ENCODE measurements at regions of chr1 and their contacts with region 1.

Region 1: DNA sequence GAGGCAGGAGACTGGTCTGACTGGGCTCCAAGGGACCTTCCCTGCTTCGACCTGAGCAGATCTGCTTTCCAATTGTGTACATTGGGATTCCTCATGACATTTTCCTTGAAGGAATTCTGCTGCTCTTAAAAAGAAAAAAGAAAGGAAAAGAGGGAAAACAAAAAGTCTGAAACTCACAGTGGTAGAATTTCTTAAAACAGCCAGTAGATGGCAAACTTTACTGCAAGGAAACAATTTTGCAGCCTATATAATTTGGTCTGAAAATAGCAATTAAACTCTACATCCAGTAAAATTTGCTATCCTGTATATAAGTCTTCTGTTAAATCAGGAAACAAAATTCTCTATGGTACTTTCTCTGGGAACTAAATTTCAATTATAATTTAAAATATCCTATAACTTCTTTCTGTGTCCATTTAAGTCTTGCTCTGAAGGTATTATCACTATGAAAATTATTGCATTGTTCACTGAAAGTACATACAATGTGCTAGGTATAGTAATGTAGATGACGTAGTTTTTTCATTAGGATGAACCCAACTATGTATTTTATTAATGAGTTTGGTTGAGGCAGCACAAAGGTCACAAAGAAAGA is 59.8 kb downstream of the CRB1 start:
- DNase-seq: no peak
- H3K4me3 ChIP-seq: no peak overlapping the region
- H3K27ac ChIP-seq: no peak overlapping the region
- H3K4me1 ChIP-seq: no peaks in the 10 kb centered on the region
- H3K27me3 ChIP-seq: no peaks in the 10 kb centered on the region
- CTCF ChIP-seq: peak; percentile 76

Region 2: DNA sequence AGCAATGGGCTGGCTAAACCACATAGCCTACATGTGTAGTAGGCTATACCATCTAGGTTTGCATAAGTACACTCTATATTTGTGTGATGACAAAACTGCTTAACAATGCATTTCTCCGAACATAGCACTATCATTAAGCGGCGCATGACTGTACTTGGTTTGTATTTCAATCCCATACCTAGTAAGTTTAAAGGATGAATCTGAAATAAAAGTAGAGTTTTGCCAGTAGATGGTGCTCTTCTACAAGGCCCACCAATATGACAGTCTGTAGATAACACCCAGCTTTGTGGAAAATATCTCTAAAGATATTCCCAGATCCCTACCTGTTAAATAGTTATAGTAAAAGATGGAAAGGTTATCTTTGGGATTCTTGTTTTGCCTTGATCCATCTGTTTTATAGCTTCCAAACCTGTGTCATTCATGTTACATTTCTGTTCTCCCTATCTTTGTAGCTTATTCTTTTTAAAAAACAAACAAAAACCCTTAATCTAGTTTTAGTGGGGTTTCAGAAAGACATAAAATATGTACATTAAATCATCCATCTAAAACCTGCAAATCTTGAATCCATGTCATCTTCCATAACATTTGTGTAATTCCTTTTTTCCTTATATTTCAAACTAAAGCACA is 147.5 kb before region 1 on chr1:
- CTCF ChIA-PET with region 1: no interaction called
- POLR2A ChIA-PET with region 1: no interaction called
- intact Hi-C with region 1: loop called (anchors 10 kb)
- DNase-seq: peak in 1 of 2 experiments; percentile 63
- H3K4me3 ChIP-seq: no peak overlapping the region
- H3K27ac ChIP-seq: no peak overlapping the region
- H3K4me1 ChIP-seq: peaks cover 24% of the 10 kb centered on the region
- H3K27me3 ChIP-seq: no peaks in the 10 kb centered on the region
- CTCF ChIP-seq: peak; percentile 79

Region 3: DNA sequence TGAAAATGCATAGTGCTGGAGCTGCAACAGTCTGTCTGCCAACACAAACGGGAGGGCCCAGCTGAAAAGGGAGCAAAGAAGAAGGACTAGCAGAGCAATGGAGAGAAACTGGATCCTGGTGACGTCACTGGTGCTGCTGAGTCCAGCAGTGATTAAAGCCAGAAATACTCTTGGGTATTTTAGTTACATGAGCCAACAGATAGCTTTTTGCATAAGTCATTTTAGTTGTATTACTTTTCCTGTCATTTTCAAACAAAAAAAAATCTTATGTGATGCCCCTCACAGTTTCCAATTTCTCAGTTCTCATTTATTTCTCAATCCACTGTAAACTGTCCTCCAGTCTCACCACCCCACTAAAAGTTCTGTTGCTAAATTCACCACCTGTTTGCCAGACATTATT is 790.3 kb after region 1 on chr1:
- CTCF ChIA-PET with region 1: no interaction called
- POLR2A ChIA-PET with region 1: interaction called, 23 read pairs
- intact Hi-C with region 1: no loop called
- DNase-seq: no peak
- H3K4me3 ChIP-seq: no peak overlapping the region
- H3K27ac ChIP-seq: no peak overlapping the region
- H3K4me1 ChIP-seq: peaks cover 19% of the 10 kb centered on the region
- H3K27me3 ChIP-seq: no peaks in the 10 kb centered on the region
- CTCF ChIP-seq: no peak